GM12878 (cell line): ENCODE measurements at regions of chr5 and their contacts with region 1.

Region 1: GRCh38 chr5:32394981-32395380 is 49.6 kb downstream of the ZFR start:
- DNase-seq: no peak
- ATAC-seq: no peak
- H3K4me3 ChIP-seq: no peak overlapping the region
- H3K27ac ChIP-seq: no peak overlapping the region
- H3K4me1 ChIP-seq: no peaks in the 10 kb centered on the region
- H3K27me3 ChIP-seq: no peaks in the 10 kb centered on the region
- CTCF ChIP-seq: no peak
- EP300 ChIP-seq: no peak
- POLR2A ChIP-seq: no peak
- RAD21 ChIP-seq: no peak

Region 2: GRCh38 chr5:32339198-32339597 is 55.8 kb before region 1 on chr5:
- CTCF ChIA-PET with region 1: no interaction called
- POLR2A ChIA-PET with region 1: no interaction called
- RAD21 ChIA-PET with region 1: no interaction called
- SMC1A ChIA-PET with region 1: no interaction called
- in situ Hi-C with region 1: no loop called
- intact Hi-C with region 1: no loop called
- DNase-seq: no peak
- ATAC-seq: no peak
- H3K4me3 ChIP-seq: no peak overlapping the region
- H3K27ac ChIP-seq: no peak overlapping the region
- H3K4me1 ChIP-seq: no peaks in the 10 kb centered on the region
- H3K27me3 ChIP-seq: no peaks in the 10 kb centered on the region
- CTCF ChIP-seq: no peak
- EP300 ChIP-seq: no peak
- POLR2A ChIP-seq: no peak
- RAD21 ChIP-seq: no peak

Region 3: DNA sequence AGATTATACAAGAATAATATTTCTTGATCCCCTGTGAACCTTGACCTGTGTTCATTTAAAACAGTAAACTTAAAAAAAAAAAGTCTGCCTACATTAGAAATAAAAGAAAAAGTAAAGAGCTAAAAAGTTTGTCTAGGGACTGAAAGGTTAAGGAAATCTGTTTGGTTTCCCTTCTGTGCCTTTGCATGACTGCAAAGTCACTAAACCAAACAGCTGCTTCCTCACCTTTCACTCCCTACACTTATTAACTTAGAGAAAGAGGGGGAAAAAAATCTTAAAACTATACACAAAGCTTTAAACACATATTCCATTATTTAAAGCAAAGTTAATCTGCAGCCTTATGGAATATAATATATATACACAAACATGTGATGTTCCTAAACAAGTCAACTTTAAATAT is 15.6 kb before region 1 on chr5:
- CTCF ChIA-PET with region 1: no interaction called
- POLR2A ChIA-PET with region 1: no interaction called
- RAD21 ChIA-PET with region 1: no interaction called
- SMC1A ChIA-PET with region 1: interaction called, 11 read pairs
- in situ Hi-C with region 1: no loop called
- intact Hi-C with region 1: no loop called
- DNase-seq: no peak
- ATAC-seq: no peak
- H3K4me3 ChIP-seq: no peak overlapping the region
- H3K27ac ChIP-seq: no peak overlapping the region
- H3K4me1 ChIP-seq: no peaks in the 10 kb centered on the region
- H3K27me3 ChIP-seq: no peaks in the 10 kb centered on the region
- CTCF ChIP-seq: no peak
- EP300 ChIP-seq: no peak
- POLR2A ChIP-seq: no peak
- RAD21 ChIP-seq: no peak